Endothelial cell of umbilical vein (primary cell): ENCODE measurements at regions of chr20 and their contacts with region 1.

Region 1: GRCh38 chr20:23637282-23638221 is at the start of gene CST3:
- DNase-seq: peak; percentile 76
- H3K4me3 ChIP-seq: peak within 1 kb of the TSS; percentile 42 to 83 (median 69)
- H3K27ac ChIP-seq: peak within 1 kb of the TSS; percentile 92
- H3K4me1 ChIP-seq: peaks cover 22% of the 10 kb centered on the region
- H3K27me3 ChIP-seq: no peaks in the 10 kb centered on the region
- CTCF ChIP-seq: no peak
- POLR2A ChIP-seq: peak; percentile 98
- total RNA-seq, gene CST3: 251 and 260 TPM in 2 replicates

Region 2: GRCh38 chr20:23361598-23362384 is 275.8 kb before region 1 on chr20 and contains the start of gene GZF1:
- CTCF ChIA-PET with region 1: no interaction called
- POLR2A ChIA-PET with region 1: no interaction called
- dilution Hi-C with region 1: no loop called
- intact Hi-C with region 1: loop called (anchors 5 kb)
- DNase-seq: peak; percentile 100
- H3K4me3 ChIP-seq: peak within 1 kb of the TSS; percentile 65 to 73 (median 67)
- H3K27ac ChIP-seq: peak within 1 kb of the TSS; percentile 90
- H3K4me1 ChIP-seq: peaks cover 40% of the 10 kb centered on the region
- H3K27me3 ChIP-seq: no peaks in the 10 kb centered on the region
- CTCF ChIP-seq: no peak
- POLR2A ChIP-seq: peak; percentile 93
- total RNA-seq, gene GZF1: 10.0 and 12.5 TPM in 2 replicates

Region 3: DNA sequence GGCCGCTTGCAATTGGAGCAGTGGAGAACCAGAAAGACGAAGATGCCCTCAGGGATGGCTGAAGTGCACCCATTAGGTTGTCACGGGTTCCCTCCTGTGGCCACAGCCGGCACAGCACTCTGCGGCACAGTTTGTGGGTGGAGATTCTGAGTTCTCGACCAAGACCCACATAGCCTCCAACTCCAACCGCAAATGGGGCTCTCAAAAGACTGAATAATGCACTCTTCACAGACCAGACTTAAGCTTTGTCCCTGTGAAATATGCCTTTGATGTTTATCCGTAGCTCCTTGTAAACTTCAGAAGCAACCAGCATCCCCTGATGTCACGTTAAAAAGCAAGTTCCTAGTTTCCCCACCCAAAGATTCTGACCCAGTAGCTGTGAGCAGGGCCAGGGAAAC is 30.9 kb before region 1 on chr20:
- CTCF ChIA-PET with region 1: interaction called, 11 read pairs
- POLR2A ChIA-PET with region 1: no interaction called
- dilution Hi-C with region 1: no loop called
- intact Hi-C with region 1: loop called (anchors 1 kb)
- DNase-seq: peak; percentile 67
- H3K4me3 ChIP-seq: no peak overlapping the region
- H3K27ac ChIP-seq: no peak overlapping the region
- H3K4me1 ChIP-seq: no peaks in the 10 kb centered on the region
- H3K27me3 ChIP-seq: peaks cover 8% of the 10 kb centered on the region in 2 experiments
- CTCF ChIP-seq: peak; percentile 86 to 90
- POLR2A ChIP-seq: no peak

Region 4: GRCh38 chr20:23622839-23623343 is 14.7 kb before region 1 on chr20:
- CTCF ChIA-PET with region 1: interaction called, 5 read pairs
- POLR2A ChIA-PET with region 1: interaction called, 5 read pairs
- dilution Hi-C with region 1: no loop called
- intact Hi-C with region 1: loop called (anchors 2 kb)
- DNase-seq: peak; percentile 68
- H3K4me3 ChIP-seq: peak overlapping the region; percentile 8 to 68 (median 20)
- H3K27ac ChIP-seq: peak overlapping the region; percentile 66
- H3K4me1 ChIP-seq: peaks cover 10% of the 10 kb centered on the region
- H3K27me3 ChIP-seq: no peaks in the 10 kb centered on the region
- CTCF ChIP-seq: no peak
- POLR2A ChIP-seq: no peak

Region 5: DNA sequence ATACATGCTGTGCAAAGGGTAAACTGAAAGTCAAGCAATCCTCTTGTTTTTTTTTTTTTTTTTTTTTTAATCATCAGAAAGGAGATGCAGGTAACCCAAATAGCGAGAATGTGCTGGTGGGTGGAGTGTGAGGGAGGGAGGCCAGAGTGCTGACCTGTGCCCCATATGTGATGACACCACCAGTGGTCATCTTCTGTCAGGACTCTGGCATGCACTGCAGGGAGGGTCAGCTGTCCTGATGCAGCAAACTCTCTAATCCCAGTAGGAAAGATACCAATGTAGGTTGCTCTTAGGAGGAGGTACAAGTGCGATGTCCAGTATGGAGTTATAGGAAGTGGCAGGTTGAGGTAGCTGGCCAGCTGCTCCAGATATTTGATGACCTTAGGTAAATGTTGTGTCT is 54.1 kb after region 1 on chr20:
- CTCF ChIA-PET with region 1: no interaction called
- POLR2A ChIA-PET with region 1: no interaction called
- dilution Hi-C with region 1: no loop called
- intact Hi-C with region 1: loop called (anchors 5 kb)
- DNase-seq: no peak
- H3K4me3 ChIP-seq: no peak overlapping the region
- H3K27ac ChIP-seq: no peak overlapping the region
- H3K4me1 ChIP-seq: peaks cover 38% of the 10 kb centered on the region
- H3K27me3 ChIP-seq: no peaks in the 10 kb centered on the region
- CTCF ChIP-seq: no peak
- POLR2A ChIP-seq: no peak

Region 6: GRCh38 chr20:23744817-23745216 is 107.3 kb after region 1 on chr20:
- CTCF ChIA-PET with region 1: no interaction called
- POLR2A ChIA-PET with region 1: no interaction called
- dilution Hi-C with region 1: no loop called
- intact Hi-C with region 1: no loop called
- DNase-seq: peak; percentile 19
- H3K4me3 ChIP-seq: no peak overlapping the region
- H3K27ac ChIP-seq: no peak overlapping the region
- H3K4me1 ChIP-seq: peaks cover 14% of the 10 kb centered on the region
- H3K27me3 ChIP-seq: no peaks in the 10 kb centered on the region
- CTCF ChIP-seq: no peak
- POLR2A ChIP-seq: no peak